RWPE1 (cell line): ENCODE measurements at regions of chr9 and their contacts with region 1.

Region 1: DNA sequence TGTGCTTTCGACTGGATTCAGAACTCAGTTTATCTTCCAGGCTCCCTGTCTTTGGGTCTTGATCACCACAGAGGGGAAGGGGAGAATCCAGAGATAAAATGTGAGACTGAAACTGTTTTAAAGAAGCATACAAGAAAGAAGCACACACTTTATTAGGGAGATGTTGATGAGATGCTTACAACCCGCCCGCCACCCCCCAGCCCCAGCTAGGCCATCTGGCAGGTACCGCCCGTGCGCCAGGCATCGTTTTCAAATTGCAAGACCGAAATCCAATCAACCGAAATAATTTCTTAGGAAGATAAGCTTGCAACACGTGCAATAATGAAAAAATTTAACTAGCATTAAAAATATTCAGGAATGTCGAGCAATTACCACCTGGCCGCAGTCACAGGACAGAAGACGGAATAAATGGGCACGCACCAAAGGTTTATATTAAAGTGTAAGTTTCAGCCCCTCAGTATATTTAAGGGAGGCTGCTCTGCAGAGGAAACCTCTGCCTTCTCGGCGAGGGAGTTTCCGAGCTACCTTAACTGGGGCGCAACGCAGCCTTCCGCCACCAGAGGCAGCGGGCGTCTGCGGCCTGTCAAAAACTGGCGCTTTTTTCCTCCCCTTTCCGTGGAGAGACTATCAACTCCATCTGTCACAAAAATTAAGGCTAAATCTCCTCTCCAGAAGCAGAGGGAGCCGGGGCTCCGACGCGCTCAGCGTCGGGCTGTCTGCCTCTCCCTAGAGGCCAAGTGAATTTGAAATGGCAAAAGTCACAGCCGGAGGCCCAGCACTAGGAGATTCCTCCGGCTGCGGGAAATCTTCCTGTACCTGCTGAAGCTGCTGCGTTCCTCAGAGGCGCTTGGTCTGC is 996 bp upstream of the GAS1 start:
- DNase-seq: peak; percentile 71
- H3K27ac ChIP-seq: peak overlapping the region; percentile 99
- CTCF ChIP-seq: peak; percentile 94

Region 2: GRCh38 chr9:86486891-86487837 is 461.1 kb before region 1 on chr9:
- CTCF ChIA-PET with region 1: interaction called, 15 read pairs
- POLR2A ChIA-PET with region 1: interaction called, 3 read pairs
- DNase-seq: peak; percentile 66
- H3K27ac ChIP-seq: no peak overlapping the region
- CTCF ChIP-seq: peak; percentile 49

Region 3: DNA sequence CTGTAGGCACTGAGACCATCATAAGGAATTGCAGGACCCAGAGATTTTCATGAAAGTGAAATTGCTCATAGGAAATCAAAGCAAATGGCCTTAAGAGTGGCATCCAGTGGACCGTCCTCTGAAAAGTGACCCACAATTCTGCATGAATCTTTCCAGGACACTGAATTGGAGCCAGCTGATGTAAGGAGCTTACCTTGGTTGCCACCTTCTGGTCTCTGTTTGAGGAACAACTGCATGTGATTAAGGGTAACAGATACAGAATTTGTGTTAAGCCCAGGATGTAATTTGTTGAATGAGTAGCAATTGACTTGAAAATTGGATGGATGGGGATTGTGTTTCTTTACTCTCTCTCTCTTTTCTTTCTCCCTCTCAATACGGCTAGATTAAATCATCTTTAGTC is 48.9 kb after region 1 on chr9:
- CTCF ChIA-PET with region 1: interaction called, 15 read pairs
- POLR2A ChIA-PET with region 1: no interaction called
- DNase-seq: peak; percentile 27
- H3K27ac ChIP-seq: no peak overlapping the region
- CTCF ChIP-seq: peak; percentile 53